ENCODE measurements at regions of chr10 and their contacts with region 1.

Region 1: GRCh38 chr10:28432210-28432676 is 100.7 kb upstream of the WAC start:
- DNase-seq: peak; percentile 73
- ATAC-seq: peak; percentile 80

Region 2: GRCh38 chr10:28400681-28401080 is 31.6 kb before region 1 on chr10:
- intact Hi-C with region 1: no loop called
- DNase-seq: no peak
- ATAC-seq: no peak

Region 3: DNA sequence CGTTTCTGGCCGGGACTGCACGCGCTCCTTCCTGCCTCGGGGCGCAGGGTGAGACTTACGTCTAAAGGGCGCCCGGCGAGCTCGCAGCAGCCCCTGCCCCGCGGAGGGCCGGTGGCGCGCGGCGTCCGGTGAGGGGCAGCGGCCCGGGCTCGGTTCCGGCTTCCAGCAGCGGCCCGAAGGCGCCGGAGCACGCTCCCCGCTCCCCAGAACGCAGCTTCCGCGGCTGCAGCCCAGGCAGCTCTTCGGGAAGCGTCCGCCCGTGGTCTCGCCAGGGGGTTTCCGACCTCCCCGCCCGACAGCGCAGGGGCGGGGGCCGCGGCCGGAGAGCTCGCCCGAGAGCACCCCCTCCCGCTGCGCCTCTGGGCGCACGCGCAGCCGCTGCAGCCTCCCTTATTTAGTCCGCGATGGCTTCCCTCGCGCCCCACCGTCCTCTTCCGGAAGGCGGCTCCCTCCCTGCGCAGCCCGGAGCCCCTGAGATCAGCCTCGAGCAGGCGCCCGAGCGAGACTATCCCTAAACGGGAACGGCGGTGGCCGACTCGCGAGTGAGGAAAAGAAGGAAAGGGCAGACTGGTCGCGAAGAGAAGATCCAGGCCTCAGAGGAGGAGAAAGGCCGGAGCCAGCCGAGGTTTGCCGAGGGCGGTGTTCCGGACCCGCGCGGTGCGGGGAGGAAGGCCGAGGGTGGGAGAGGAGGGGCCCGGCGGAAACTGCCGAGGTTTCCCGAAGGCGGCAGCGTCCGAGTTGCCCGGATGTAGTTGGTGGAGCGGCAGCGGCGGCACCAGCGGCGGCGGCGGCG is 100.3 kb after region 1 on chr10 and contains the start of gene WAC:
- intact Hi-C with region 1: loop called (anchors 5 kb)
- DNase-seq: peak; percentile 98
- ATAC-seq: peak; percentile 95
- total RNA-seq, gene WAC: 100 TPM

Region 4: DNA sequence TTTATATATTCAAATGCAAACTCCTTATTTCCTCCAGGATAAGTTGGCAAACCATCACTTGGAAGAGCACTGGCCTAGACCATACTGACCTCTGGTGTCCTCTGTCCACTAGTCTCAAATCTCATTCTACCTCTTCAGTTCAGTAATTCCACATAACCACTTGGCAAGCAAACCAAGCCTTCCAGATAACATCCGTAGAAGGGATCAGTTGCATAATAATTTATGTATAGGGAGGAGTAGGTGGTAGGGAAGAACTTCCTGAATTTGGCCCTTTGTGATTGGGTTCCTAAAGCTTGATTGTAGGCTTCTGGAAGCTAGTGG is 155.7 kb after region 1 on chr10:
- intact Hi-C with region 1: loop called (anchors 5 kb)
- DNase-seq: no peak
- ATAC-seq: peak; percentile 82